ENCODE measurements at regions of chr12 and their contacts with region 1.

Region 1: GRCh38 chr12:63843721-63844390 is 644 bp upstream of the SRGAP1 start:
- DNase-seq: peak; percentile 92
- H3K4me3 ChIP-seq: peak overlapping the region; percentile 78 to 94 (median 88)
- H3K27ac ChIP-seq: peak overlapping the region; percentile 93 to 97 (median 96)
- H3K4me1 ChIP-seq: peaks cover 5 to 30% (median 15%) of the 10 kb centered on the region in 4 donors
- H3K27me3 ChIP-seq: no peaks in the 10 kb centered on the region
- CTCF ChIP-seq: peak; percentile 75 to 98 (median 84)
- EP300 ChIP-seq: no peak
- POLR2A ChIP-seq: peak; percentile 43

Region 2: DNA sequence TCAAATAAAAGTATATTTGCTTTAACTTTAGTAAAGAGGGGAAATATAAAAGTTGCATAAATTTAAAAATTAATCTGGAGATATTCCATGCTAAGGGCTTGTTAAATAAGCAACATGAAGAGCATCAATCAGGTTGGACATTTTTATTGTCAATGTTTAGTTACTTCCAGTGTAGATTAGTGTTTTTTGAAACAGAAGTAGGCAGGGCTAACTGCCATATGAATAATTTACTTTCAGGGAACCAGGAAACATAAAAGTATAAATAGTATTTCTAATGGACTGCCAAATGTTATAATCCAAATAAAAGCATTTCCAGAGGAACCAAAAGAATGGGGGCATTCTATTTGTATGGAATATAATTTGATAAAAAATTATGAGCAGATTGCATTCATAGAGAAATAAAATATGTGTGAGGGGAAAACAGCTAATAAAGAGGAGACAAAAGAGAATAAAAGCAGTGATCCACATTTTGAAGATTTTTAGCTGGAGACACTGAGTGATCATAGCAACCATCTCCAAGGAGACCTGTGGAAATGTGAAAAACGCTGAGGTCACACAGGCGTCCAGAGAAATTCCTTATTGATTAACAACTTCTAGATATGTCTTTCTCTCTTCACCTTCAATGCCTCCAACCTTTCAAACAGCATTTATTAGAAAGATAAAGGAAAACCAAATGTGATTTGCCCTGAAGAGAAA is 71.4 kb after region 1 on chr12:
- in situ Hi-C with region 1: no loop called
- intact Hi-C with region 1: no loop called
- DNase-seq: no peak
- H3K4me3 ChIP-seq: no peak overlapping the region
- H3K27ac ChIP-seq: peak overlapping the region in 1 of 4 donors; percentile 85
- H3K4me1 ChIP-seq: peaks cover 24 to 66% (median 51%) of the 10 kb centered on the region in 4 donors
- H3K27me3 ChIP-seq: no peaks in the 10 kb centered on the region
- CTCF ChIP-seq: no peak
- EP300 ChIP-seq: no peak
- POLR2A ChIP-seq: no peak

Region 3: DNA sequence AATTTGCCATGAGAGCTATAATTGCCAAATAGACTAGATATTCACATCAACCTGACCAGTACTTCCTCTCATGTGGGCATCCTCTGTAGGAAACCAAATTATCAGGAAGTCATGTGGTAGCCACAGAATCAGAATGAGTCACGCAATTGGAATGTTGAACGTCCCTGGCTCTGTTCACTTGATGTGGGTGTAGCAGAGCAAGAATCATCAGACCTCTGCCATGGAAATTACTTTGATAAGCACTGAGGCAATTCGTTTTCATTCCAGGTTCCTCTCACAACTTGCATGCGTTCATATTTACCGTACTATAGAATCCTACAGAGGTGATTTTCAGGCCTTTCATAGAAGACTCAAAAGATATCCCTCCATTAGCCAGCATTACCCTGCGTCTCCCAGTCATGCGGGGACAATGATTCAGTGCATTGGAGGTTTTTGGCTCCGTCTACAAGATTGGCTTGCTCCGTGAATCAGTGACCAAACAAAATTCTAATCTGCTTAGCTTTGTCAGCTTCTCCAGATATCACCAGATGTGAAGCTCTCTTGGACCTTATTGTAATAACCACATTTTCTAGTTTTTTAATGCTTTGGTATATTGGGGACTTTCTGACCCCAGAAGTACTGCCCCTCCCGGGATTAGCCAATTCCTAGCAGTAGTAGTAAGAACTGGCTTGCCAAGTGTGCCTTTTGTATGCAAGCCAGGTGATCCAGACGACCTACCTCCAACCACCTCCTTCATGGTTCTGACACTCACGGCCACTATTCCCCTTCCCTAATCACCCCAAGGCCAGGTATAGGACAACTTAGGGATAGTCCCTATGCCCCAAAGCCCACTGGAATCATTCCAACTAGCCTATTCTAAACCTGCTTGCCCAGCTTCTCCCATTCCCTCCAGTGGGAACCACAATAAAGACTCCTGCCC is 244.8 kb after region 1 on chr12:
- in situ Hi-C with region 1: loop called in 1 of 4 experiments (anchors 10 kb)
- intact Hi-C with region 1: loop called (anchors 10 kb)
- DNase-seq: peak; percentile 65
- H3K4me3 ChIP-seq: no peak overlapping the region
- H3K27ac ChIP-seq: peak overlapping the region; percentile 51 to 70 (median 62)
- H3K4me1 ChIP-seq: peaks cover 8 to 19% (median 14%) of the 10 kb centered on the region in 4 donors
- H3K27me3 ChIP-seq: no peaks in the 10 kb centered on the region
- CTCF ChIP-seq: no peak
- EP300 ChIP-seq: no peak
- POLR2A ChIP-seq: no peak

Region 4: DNA sequence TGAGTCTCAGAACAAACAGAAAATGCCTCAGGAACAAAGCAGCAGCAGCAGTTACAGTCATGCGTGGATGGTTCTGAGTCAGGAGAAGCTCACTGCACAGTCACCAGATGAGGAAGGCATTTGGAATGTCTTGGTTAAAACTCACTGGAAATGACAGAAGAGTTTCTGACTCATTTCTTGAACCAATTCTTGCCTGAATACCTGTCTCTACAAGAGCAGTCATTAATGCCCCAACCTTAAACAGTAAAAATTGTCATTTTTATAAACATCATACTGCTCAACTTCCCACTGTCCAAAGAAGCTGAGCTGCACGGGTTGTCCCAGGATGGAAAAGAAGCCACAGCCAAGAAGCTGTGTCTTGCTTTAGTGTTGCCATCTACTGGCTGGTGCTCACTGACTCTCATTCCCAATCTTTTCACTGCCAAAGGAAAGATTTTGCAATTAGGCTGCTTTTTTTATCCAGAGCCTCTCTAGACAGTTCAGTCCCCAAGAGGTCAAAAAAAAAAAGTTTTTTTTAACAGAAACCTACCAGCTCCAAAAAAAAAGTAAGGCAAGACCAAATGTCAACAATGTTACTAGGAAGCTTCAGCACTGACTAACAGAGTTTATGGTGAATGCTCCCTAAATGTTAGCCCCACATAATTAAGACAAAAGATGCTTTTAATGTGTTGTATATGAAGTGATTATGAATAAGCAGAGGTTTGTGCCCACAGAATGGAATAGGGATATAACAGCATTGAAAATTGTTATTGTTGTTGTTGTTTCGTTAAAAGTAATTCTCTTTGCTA is 337.8 kb after region 1 on chr12:
- in situ Hi-C with region 1: loop called in 2 of 4 experiments (anchors 10 kb)
- intact Hi-C with region 1: loop called (anchors 1 kb)
- DNase-seq: peak; percentile 51
- H3K4me3 ChIP-seq: no peak overlapping the region
- H3K27ac ChIP-seq: peak overlapping the region; percentile 2 to 54 (median 48)
- H3K4me1 ChIP-seq: peaks cover 0 to 8% (median 0%) of the 10 kb centered on the region in 4 donors
- H3K27me3 ChIP-seq: no peaks in the 10 kb centered on the region
- CTCF ChIP-seq: peak; percentile 50 to 68 (median 59)
- EP300 ChIP-seq: peak; percentile 2
- POLR2A ChIP-seq: no peak

Region 5: DNA sequence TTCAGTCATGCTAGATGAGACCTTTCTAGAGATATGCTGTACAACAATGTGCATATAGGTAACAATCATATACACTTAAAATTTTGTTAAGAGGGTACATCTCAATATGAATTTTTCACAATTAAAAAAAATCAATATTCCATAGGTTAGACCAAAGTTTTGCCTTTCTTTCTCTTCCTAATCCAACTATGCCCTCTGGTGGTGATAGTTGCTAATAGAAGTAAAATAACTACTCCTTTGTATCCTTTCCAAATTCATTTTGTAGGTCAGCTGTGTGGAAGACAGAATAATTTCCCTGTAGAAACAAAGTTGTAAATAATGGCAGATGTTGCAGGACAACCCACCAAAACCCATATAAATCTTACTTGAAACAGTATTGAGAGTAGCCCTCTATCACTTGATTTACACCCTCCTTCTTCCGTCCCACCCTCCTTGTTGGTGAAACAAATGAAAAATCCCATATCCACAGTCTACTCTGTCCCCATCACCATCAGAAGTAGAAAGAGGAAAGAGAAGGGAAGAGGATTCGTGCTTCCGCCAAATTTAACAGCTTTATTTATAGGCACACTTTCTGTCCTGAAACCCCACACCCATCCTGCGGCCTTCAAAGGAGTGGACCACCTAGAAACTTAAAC is 412.4 kb after region 1 on chr12:
- in situ Hi-C with region 1: loop called in 2 of 4 experiments (anchors 5 kb)
- intact Hi-C with region 1: loop called (anchors 5 kb)
- DNase-seq: no peak
- H3K4me3 ChIP-seq: no peak overlapping the region
- H3K27ac ChIP-seq: no peak overlapping the region
- H3K4me1 ChIP-seq: no peaks in the 10 kb centered on the region
- H3K27me3 ChIP-seq: no peaks in the 10 kb centered on the region
- CTCF ChIP-seq: peak; percentile 64 to 75 (median 69)
- EP300 ChIP-seq: no peak
- POLR2A ChIP-seq: no peak

Region 6: DNA sequence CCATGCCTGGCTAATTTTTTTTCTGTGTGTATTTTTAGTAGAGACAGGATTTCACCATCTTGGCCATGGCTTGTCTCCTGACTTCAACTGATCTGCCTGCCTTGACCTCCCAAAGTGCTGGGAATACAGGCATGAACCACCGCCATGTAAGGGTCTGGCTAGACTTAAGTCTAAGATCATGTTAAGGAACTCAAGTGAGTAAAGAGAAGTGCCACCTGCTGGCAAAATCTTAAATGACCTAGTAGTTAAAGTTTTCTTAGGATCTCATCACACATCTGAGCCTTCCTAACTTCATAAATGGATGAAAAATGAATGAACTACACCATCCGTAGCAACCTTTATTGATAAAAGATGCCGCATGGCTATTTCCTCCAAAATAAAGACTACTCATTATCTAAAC is 548.4 kb after region 1 on chr12:
- in situ Hi-C with region 1: loop called in 2 of 4 experiments (anchors 25 kb)
- intact Hi-C with region 1: no loop called
- DNase-seq: no peak
- H3K4me3 ChIP-seq: no peak overlapping the region
- H3K27ac ChIP-seq: no peak overlapping the region
- H3K4me1 ChIP-seq: peaks cover 0 to 9% (median 7%) of the 10 kb centered on the region in 4 donors
- H3K27me3 ChIP-seq: peaks cover 40% of the 10 kb centered on the region
- CTCF ChIP-seq: peak in 2 of 5 experiments; percentile 10 to 25
- EP300 ChIP-seq: no peak
- POLR2A ChIP-seq: no peak

Region 7: DNA sequence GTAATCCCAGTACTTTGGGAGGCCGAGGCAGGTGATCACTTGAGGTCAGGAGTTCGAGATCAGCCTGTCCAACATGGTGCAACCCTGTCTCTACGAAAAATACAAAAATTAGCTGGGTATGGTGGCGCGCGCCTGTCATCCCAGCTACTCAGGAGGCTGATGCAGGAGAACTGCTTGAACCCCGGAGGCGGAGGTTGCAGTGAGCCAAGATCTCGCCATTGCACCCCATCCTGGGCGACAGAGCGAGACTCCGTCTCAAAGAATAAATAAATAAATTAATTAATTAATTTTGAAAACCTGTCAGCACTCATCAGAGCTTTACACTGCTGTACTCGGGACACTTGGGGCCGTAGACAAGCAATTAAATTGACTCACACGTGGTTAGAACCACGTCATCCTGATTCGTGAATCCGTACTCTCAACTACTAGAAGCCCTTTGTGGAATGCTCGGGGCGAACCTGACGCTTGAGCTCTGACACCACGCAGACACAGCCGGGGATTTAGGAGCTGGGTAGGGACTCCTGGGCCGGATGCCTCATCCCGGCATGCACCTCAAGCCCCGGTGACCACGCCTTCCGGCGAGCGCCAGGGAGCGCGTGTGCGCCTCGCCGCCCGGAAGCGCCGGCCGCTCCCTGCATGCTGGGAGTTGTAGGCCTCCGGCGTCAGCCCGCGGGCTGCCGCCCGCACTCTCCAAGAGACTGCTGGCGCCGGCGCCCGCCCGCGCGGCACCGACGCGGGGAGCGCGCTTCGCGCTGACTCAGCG is 560.0 kb after region 1 on chr12 and contains the start of gene XPOT:
- in situ Hi-C with region 1: loop called in 3 of 4 experiments (anchors 25 kb)
- intact Hi-C with region 1: no loop called
- DNase-seq: peak; percentile 95
- H3K4me3 ChIP-seq: peak within 1 kb of the TSS; percentile 57 to 92 (median 84)
- H3K27ac ChIP-seq: peak within 1 kb of the TSS; percentile 94 to 100 (median 96)
- H3K4me1 ChIP-seq: peaks cover 0 to 13% (median 9%) of the 10 kb centered on the region in 4 donors
- H3K27me3 ChIP-seq: no peaks in the 10 kb centered on the region
- CTCF ChIP-seq: no peak
- EP300 ChIP-seq: no peak
- POLR2A ChIP-seq: no peak
- total RNA-seq, gene XPOT: 15.7 to 56.9 (median 27.0) TPM

Measured in transverse colon (tissue), 4 donors.